Vagina (tissue), 2 donors: ENCODE measurements at regions of chr3 and their contacts with region 1.

Region 1: DNA sequence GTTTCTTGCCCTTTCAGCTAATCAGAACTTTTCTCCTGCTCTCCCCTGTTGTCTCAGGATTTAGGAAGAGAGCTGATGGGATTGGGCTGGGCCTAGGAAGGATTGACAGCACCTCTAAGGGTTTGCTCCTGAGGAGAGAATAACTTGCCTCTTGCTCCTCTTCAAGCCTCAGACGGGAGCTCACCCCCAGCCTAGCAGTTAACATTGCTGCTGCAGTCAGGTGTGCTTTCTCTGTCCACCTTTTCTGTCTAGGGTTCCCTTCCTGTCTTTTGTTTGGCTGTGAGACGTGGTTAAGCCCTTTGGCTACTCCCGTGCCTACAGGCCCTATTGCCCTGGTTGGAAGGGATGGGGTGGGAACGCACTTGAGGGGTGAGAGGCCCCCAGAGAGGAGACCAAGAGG is 20.1 kb downstream of the TMEM108 start:
- DNase-seq: no peak
- H3K4me3 ChIP-seq: no peak overlapping the region
- H3K27ac ChIP-seq: no peak overlapping the region
- H3K4me1 ChIP-seq: no peaks in the 10 kb centered on the region
- H3K27me3 ChIP-seq: no peaks in the 10 kb centered on the region
- CTCF ChIP-seq: no peak
- POLR2A ChIP-seq: no peak

Region 2: DNA sequence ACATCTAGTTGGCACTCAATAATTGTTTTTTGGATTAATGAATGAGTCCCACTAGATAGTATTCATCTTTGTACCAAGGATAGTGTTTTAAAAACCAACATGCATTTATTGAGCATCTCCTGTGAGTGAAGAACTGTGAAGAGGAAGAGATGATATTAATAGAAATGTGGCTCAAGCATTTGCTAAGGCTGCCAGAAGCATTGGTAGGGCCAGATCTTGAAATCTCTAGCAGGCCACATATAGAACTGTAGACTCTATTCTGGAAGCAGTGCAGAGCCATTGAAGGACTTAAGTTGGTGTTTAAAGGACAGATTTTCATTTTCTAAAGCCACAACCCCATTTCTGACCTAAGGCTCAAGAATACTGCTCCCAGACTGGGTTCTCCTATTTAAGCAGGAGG is 1932.6 kb before region 1 on chr3:
- intact Hi-C with region 1: loop called (anchors 5 kb)
- DNase-seq: no peak
- H3K4me3 ChIP-seq: no peak overlapping the region
- H3K27ac ChIP-seq: no peak overlapping the region
- H3K4me1 ChIP-seq: no peaks in the 10 kb centered on the region
- H3K27me3 ChIP-seq: no peaks in the 10 kb centered on the region
- CTCF ChIP-seq: no peak
- POLR2A ChIP-seq: no peak

Region 3: GRCh38 chr3:133661454-133662277 is 603.4 kb after region 1 on chr3 and contains the start of gene TOPBP1:
- intact Hi-C with region 1: no loop called
- DNase-seq: no peak
- H3K4me3 ChIP-seq: peak within 1 kb of the TSS; percentile 66 to 89
- H3K27ac ChIP-seq: peak within 1 kb of the TSS; percentile 88
- H3K4me1 ChIP-seq: peaks cover 38% of the 10 kb centered on the region
- H3K27me3 ChIP-seq: no peaks in the 10 kb centered on the region
- CTCF ChIP-seq: no peak
- POLR2A ChIP-seq: no peak
- total RNA-seq, gene TOPBP1: 28.2 TPM